Common myeloid progenitor, CD34-positive (primary cell): ENCODE measurements at regions of chr1 and their contacts with region 1.

Region 1: DNA sequence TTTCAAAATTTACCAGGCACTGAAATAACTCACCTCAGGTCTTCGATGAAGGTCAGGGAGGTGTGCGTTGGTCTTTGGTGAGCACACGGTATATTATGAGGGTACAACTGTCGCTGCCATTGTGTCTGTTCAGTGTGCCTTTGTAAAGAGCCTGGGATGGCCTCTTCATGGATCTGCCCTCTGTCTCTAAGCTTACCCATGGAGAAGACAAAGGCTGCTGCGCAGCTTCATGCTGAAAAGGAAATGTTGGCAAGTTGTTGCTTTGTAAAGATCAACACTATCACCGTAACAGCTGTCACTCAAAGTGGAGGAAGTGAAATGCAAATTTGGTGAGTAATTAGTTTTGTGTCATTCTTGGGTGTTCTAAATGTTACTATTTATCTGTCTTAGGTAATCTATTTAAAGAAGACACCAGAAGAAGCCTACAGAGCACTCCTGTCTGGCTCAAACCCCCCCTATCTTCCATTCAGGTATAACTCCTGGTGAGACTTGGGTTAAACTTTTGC is 71.6 kb downstream of the CDC14A start:
- DNase-seq: no peak
- H3K4me3 ChIP-seq: no peak overlapping the region
- H3K27ac ChIP-seq: no peak overlapping the region
- H3K4me1 ChIP-seq: peaks cover 0 to 10% (median 2%) of the 10 kb centered on the region in 4 experiments
- H3K27me3 ChIP-seq: no peaks in the 10 kb centered on the region

Region 2: DNA sequence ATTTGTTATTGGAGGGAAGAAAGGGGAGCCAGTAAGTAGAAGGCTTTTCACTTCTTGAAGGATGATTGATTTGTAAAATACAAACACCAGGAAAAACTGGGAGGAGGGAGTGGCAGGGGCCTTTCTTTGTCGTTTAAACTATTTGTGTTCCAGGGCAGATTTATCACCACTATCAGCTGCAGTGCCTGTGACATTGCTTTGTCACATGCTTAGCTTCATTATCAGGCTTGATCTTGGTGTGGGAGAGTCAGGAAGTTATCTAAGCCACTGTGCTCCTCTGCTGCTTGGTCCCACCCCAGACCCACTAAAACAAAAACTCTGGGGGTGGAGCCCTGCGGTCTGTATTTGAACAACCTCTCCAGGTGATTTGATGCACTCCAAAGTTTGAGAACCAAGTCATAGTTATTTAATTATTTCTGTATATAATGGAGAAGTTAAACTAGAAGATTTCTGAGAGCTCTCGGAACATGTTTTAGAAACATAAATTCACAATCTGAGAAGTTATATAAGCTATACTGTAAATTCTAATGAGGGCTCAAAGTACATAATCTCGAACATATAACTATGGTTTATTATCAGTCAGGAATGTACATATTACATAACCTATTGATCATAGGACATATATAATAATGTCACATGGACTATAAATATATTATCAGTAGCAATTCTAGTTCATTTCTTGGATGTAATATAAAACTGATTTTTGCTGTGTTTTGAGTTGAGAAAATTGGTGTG is 16.4 kb after region 1 on chr1:
- CTCF ChIA-PET with region 1: interaction called, 3 read pairs
- POLR2A ChIA-PET with region 1: interaction called, 12 read pairs
- DNase-seq: peak; percentile 63 to 91 (median 82)
- H3K4me3 ChIP-seq: no peak overlapping the region
- H3K27ac ChIP-seq: peak overlapping the region in 1 of 2 experiments; percentile 38
- H3K4me1 ChIP-seq: peaks cover 6 to 54% (median 35%) of the 10 kb centered on the region in 4 experiments
- H3K27me3 ChIP-seq: no peaks in the 10 kb centered on the region